ENCODE measurements at regions of chr2 and their contacts with region 1.

Region 1: DNA sequence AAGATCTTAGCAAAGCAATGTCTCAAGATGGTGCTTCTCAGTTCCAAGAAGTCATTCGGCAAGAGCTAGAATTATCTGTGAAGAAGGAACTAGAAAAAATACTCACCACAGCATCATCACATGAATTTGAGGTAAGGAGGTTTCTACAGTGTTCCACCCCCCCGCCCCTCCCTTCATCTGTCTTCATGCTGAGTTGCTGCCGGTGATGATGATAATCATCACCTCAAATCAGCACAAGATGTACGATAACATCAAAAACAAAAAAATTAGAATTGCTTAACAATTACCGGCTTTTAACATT is 14.6 kb downstream of the UGP2 start:
- DNase-seq: no peak
- CTCF ChIP-seq: no peak

Region 2: DNA sequence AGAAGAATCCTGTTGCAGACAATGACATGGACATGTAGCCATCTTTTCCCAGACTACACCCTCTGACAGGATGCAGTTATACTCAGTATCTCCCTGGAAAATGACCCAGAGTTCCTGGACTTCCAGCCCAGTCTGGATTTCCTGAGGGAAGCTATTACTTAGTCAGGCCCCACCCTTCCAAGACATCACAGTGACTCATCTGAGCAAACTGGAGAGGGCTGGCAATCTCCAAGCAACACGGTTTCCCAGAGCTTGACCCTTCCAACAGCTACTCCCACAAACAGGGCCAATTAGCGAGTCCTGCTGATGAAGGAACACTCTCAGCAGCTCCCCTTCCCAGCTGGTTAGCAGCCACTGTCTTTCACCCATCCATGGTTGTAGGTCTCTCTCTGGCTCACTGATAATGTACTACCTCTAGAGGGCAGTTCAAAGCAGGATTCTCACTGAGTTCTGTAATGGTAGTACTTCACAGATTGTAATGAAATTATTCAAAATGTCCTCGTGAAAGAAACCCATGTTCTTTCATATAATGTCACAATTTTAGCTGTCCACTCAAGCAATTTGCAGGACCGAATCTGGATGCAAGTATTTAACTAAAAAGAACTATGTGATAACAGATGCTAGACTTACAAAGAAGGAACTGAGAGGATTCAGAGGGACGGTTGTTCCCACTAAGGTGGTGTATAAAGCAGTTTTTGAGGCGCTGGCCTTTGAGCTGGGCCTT is 157.3 kb before region 1 on chr2:
- CTCF ChIA-PET with region 1: interaction called, 38 read pairs
- POLR2A ChIA-PET with region 1: no interaction called
- DNase-seq: peak; percentile 41
- CTCF ChIP-seq: peak; percentile 68

Region 3: GRCh38 chr2:63841254-63842022 is 14.8 kb before region 1 on chr2 and contains the start of gene UGP2:
- CTCF ChIA-PET with region 1: interaction called, 36 read pairs
- POLR2A ChIA-PET with region 1: interaction called, 6 read pairs
- DNase-seq: peak; percentile 84
- CTCF ChIP-seq: peak; percentile 38

Region 4: GRCh38 chr2:64000630-64001381 is 144.6 kb after region 1 on chr2:
- CTCF ChIA-PET with region 1: no interaction called
- POLR2A ChIA-PET with region 1: no interaction called
- DNase-seq: no peak
- CTCF ChIP-seq: no peak

Measured in GM10248 (cell line).